ENCODE measurements at regions of chr13 and their contacts with region 1.

Region 1: GRCh38 chr13:111060237-111060919 is 54.7 kb upstream of the ARHGEF7 start:
- DNase-seq: no peak
- H3K4me3 ChIP-seq: no peak overlapping the region
- H3K27ac ChIP-seq: no peak overlapping the region
- H3K4me1 ChIP-seq: no peaks in the 10 kb centered on the region
- H3K27me3 ChIP-seq: 0 out of 2 replicates have a peak, but pooled peaks cover 3% of the 10 kb centered on the region
- CTCF ChIP-seq: no peak

Region 2: DNA sequence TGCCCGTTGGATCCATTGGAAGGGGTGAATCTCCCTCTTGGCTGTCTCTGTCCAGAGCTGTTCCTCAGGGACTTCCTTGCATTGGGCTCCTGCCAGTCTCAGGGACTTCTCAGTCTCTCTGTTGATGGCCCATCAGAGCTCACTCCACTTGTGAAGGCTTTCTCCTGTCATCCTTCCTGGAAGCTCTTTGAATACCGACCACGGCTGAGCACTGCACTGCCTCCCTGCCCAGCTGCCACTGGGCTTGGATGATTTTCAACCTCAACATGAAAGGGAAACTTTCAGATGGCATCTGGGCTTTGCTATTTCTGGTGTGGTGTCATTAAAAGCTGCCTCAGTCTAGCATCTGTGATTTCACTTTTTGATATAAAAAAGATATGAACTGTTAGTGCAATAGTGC is 79.5 kb before region 1 on chr13:
- CTCF ChIA-PET with region 1: no interaction called
- POLR2A ChIA-PET with region 1: interaction called, 10 read pairs
- intact Hi-C with region 1: no loop called
- DNase-seq: no peak
- H3K4me3 ChIP-seq: no peak overlapping the region
- H3K27ac ChIP-seq: no peak overlapping the region
- H3K4me1 ChIP-seq: peaks cover 15% of the 10 kb centered on the region
- H3K27me3 ChIP-seq: no peaks in the 10 kb centered on the region
- CTCF ChIP-seq: no peak

Region 3: DNA sequence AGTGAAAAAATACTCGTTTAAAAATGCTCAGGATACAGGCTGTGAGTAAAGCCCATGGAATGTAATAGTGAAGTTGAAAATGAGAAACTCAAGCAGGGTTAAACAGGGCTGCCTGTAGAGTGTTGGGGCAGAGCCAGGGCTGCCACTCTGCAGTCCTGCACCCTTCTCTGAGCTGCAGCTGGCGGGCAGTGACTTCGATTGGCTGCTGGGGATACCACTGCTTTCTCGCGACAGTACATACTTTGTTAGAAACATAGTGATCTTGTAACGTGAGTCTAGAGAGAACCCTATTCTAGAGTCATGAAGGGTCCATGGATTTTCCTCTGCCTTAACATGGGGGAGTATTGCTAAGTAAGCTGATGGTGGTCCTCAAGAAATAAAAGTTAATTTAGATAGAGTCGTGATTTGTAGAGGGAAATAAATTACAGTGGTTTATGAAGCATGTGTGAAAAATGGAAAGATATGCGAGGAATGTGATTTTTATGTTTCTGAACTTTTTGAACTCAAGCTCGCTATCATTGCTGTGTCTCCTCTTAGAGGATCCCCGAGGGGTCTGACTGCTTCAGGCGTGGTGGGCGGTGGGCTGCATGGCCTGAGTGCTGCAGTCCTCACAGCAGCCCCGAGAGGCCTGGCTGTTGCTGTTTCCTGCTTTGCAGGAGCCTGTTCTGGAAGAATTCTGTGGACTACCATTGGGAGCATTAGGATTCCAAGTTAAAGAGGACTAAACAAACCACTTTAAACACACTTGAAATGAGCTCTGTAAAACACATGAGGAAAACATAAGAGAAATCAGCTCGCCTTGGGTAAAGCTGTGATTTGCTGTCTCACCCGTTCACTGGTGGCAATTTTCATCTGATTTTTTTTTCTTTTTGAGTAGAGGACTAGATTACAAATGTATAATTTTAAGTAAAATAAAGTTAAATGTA is 150.4 kb after region 1 on chr13:
- CTCF ChIA-PET with region 1: no interaction called
- POLR2A ChIA-PET with region 1: no interaction called
- intact Hi-C with region 1: no loop called
- DNase-seq: peak in 1 of 2 experiments; percentile 7
- H3K4me3 ChIP-seq: no peak overlapping the region
- H3K27ac ChIP-seq: no peak overlapping the region
- H3K4me1 ChIP-seq: no peaks in the 10 kb centered on the region
- H3K27me3 ChIP-seq: no peaks in the 10 kb centered on the region
- CTCF ChIP-seq: no peak